ENCODE measurements at regions of chr17 and their contacts with region 1.

Region 1: GRCh38 chr17:74601944-74602572 is 10.0 kb upstream of the CD300LD start:
- DNase-seq: peak; percentile 53
- ATAC-seq: peak; percentile 89
- H3K4me3 ChIP-seq: no peak overlapping the region
- H3K27ac ChIP-seq: no peak overlapping the region
- H3K4me1 ChIP-seq: peaks cover 0 to 8% of the 10 kb centered on the region in 2 experiments; a peak in 1 of 4 replicates
- H3K27me3 ChIP-seq: peaks cover 64% of the 10 kb centered on the region
- CTCF ChIP-seq: peak; percentile 76 to 95 (median 85)
- POLR2A ChIP-seq: no peak
- RAD21 ChIP-seq: peak; percentile 94

Region 2: GRCh38 chr17:74305865-74306654 is 296.0 kb before region 1 on chr17:
- CTCF ChIA-PET with region 1: no interaction called
- POLR2A ChIA-PET with region 1: no interaction called
- RAD21 ChIA-PET with region 1: no interaction called
- intact Hi-C with region 1: loop called (anchors 10 kb)
- DNase-seq: no peak
- ATAC-seq: peak; percentile 23; the same call in 1 of the 2 replicates
- H3K4me3 ChIP-seq: no peak overlapping the region
- H3K27ac ChIP-seq: no peak overlapping the region
- H3K4me1 ChIP-seq: peaks cover 0 to 3% of the 10 kb centered on the region in 2 experiments; a peak in 1 of 4 replicates
- H3K27me3 ChIP-seq: no peaks in the 10 kb centered on the region
- CTCF ChIP-seq: peak; percentile 11 to 45 (median 20); a peak in 3 of 6 replicates
- POLR2A ChIP-seq: no peak
- RAD21 ChIP-seq: no peak; the same call in none of the 2 replicates

Region 3: GRCh38 chr17:74379495-74380085 is 222.5 kb before region 1 on chr17:
- CTCF ChIA-PET with region 1: interaction called, 20 read pairs
- POLR2A ChIA-PET with region 1: no interaction called
- RAD21 ChIA-PET with region 1: interaction called in 1 of 2 experiments, 3 read pairs
- intact Hi-C with region 1: loop called (anchors 1 kb)
- DNase-seq: peak; percentile 69
- ATAC-seq: peak; percentile 92
- H3K4me3 ChIP-seq: peak overlapping the region; percentile 6 to 45; a peak in 3 of 4 replicates
- H3K27ac ChIP-seq: peak overlapping the region; percentile 43; the same call in 1 of the 2 replicates
- H3K4me1 ChIP-seq: peaks cover 19 to 26% of the 10 kb centered on the region in 2 experiments
- H3K27me3 ChIP-seq: peaks cover 13% of the 10 kb centered on the region; the same call in 1 of the 2 replicates
- CTCF ChIP-seq: peak; percentile 93 to 98 (median 98)
- POLR2A ChIP-seq: no peak
- RAD21 ChIP-seq: peak; percentile 100

Region 4: DNA sequence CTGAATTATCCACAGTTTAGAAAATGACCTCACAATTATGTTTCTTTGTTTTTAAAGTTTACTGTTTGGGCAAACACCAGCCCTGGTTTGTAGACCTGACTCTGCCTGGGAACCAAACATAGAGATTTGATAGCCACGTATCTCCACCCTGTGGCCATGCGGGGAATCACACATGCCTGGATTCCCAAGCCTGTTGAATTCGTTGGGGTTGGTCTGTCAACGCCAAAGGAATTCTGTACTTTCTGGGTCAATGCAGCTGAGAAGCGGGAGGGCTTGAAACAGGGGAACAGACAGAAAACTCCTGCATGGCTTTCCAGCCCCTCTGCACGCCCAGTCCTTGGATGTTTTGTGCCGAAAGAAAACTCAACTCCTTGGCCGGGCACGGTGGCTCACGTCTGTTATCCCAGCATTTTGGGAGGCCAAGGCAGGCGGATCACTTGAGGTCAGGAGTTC is 108.7 kb before region 1 on chr17:
- CTCF ChIA-PET with region 1: no interaction called
- POLR2A ChIA-PET with region 1: no interaction called
- RAD21 ChIA-PET with region 1: interaction called in 1 of 2 experiments, 3 read pairs
- intact Hi-C with region 1: loop called (anchors 1 kb)
- DNase-seq: peak; percentile 73
- ATAC-seq: peak; percentile 98
- H3K4me3 ChIP-seq: no peak overlapping the region
- H3K27ac ChIP-seq: no peak overlapping the region
- H3K4me1 ChIP-seq: no peaks in the 10 kb centered on the region
- H3K27me3 ChIP-seq: no peaks in the 10 kb centered on the region
- CTCF ChIP-seq: peak; percentile 97 to 99 (median 97)
- POLR2A ChIP-seq: no peak
- RAD21 ChIP-seq: peak; percentile 97

Region 5: DNA sequence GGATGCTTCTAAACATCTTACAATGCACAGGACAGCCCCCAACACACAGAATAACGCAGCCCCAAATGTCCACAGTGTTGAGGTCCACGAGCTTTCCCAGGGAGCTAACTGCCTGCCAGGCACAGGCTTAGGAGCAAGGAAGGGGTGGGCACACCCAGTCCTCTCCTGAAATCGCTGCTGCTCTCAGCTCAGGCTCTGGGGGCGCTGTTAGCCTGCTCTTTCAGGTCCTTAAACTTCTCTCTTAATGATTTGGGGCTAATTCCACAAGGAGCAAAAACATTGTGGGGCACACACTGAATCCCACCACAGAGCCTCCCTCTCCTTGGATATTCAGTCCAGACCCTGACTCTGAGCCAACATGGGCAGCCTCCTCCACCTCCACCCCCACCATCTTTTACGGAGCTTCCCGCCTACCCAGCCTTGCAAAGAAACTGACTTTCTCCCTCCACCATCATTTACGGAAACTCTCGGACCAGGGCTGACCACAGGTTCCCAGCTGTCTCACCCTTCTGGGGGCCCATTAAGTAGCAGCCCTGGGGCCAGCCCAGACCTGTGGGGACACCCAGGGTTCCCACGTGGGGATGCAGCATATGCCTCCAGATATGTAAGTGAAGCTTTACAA is 35.8 kb before region 1 on chr17:
- CTCF ChIA-PET with region 1: interaction called, 13 read pairs
- POLR2A ChIA-PET with region 1: no interaction called
- RAD21 ChIA-PET with region 1: no interaction called
- intact Hi-C with region 1: loop called (anchors 1 kb)
- DNase-seq: peak; percentile 57
- ATAC-seq: peak; percentile 75
- H3K4me3 ChIP-seq: no peak overlapping the region
- H3K27ac ChIP-seq: no peak overlapping the region
- H3K4me1 ChIP-seq: peaks cover 14 to 25% of the 10 kb centered on the region in 2 experiments
- H3K27me3 ChIP-seq: peaks cover 10% of the 10 kb centered on the region; the same call in 1 of the 2 replicates
- CTCF ChIP-seq: peak; percentile 84 to 98 (median 97)
- POLR2A ChIP-seq: no peak
- RAD21 ChIP-seq: peak; percentile 86

Measured in HCT116 (cell line).